ENCODE measurements at regions of chr11 and their contacts with region 1.

Region 1: GRCh38 chr11:60970369-60970774 is 1.1 kb upstream of the CD6 start:
- DNase-seq: no peak
- ATAC-seq: peak; percentile 96
- H3K4me3 ChIP-seq: no peak overlapping the region
- H3K27ac ChIP-seq: no peak overlapping the region
- H3K4me1 ChIP-seq: peaks cover 6% of the 10 kb centered on the region; the same call in 1 of the 2 replicates
- H3K27me3 ChIP-seq: no peaks in the 10 kb centered on the region
- CTCF ChIP-seq: peak; percentile 87 to 96 (median 94)
- EP300 ChIP-seq: no peak
- POLR2A ChIP-seq: no peak
- RAD21 ChIP-seq: peak; percentile 90

Region 2: GRCh38 chr11:60944490-60945294 is 25.7 kb before region 1 on chr11:
- CTCF ChIA-PET with region 1: interaction called, 12 read pairs
- POLR2A ChIA-PET with region 1: no interaction called
- RAD21 ChIA-PET with region 1: interaction called, 5 read pairs
- SMC1A ChIA-PET with region 1: interaction called, 14 read pairs
- in situ Hi-C with region 1: no loop called
- intact Hi-C with region 1: no loop called
- DNase-seq: no peak
- ATAC-seq: peak; percentile 76
- H3K4me3 ChIP-seq: 0 out of 2 replicates have a peak overlapping the region, but pooled peaks have one; percentile 8
- H3K27ac ChIP-seq: peak overlapping the region; percentile 31; the same call in 1 of the 2 replicates
- H3K4me1 ChIP-seq: peaks cover 20% of the 10 kb centered on the region
- H3K27me3 ChIP-seq: no peaks in the 10 kb centered on the region
- CTCF ChIP-seq: peak in 2 of 3 experiments; percentile 39 to 48; a peak in 4 of 6 replicates
- EP300 ChIP-seq: no peak
- POLR2A ChIP-seq: peak; percentile 26; the same call in 1 of the 2 replicates
- RAD21 ChIP-seq: peak; percentile 45

Region 3: DNA sequence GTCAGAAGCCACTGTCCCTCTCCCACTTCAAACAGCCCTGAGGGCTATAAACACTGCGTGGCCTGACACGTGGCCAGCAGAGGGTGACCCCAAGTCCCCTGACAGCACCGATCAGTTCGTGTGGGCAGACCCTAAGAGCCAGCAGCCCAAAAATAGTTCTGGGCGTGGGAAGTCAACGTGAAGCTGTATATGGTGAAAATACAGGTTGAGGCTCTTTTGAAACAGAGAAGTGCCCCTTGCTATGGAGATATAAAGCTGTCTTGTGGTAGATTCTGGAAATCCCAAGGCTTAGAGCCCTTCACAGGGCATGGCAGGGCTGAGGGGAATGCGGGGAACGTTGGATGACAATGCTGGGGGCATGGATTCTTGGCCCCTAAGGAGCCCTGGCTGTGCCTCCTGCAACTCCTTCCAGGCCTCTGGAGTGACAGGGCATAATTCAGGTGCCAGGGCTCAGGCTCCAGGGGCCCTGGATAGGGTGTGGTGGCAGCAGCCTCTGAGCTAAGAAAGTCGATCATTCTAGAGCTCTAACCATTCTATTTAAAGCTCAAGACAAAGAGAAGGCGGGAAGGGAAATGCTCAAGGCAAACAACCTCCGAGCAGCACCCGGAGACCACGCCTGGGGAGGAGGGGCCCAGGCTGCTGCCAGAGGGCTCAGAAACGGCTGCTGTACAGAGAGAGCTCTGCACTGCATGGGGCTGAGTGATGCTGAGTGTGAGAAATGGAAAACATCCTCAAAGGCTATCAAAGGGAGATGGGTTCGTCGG is 71.6 kb after region 1 on chr11:
- CTCF ChIA-PET with region 1: interaction called, 35 read pairs
- POLR2A ChIA-PET with region 1: interaction called, 5 read pairs
- RAD21 ChIA-PET with region 1: interaction called, 27 read pairs
- SMC1A ChIA-PET with region 1: no interaction called
- in situ Hi-C with region 1: no loop called
- intact Hi-C with region 1: no loop called
- DNase-seq: no peak
- ATAC-seq: peak; percentile 89
- H3K4me3 ChIP-seq: peak overlapping the region; percentile 51; the same call in 1 of the 2 replicates
- H3K27ac ChIP-seq: peak overlapping the region; percentile 77
- H3K4me1 ChIP-seq: peaks cover 15% of the 10 kb centered on the region
- H3K27me3 ChIP-seq: no peaks in the 10 kb centered on the region
- CTCF ChIP-seq: no peak
- EP300 ChIP-seq: peak in 1 of 2 experiments; percentile 26; a peak in 2 of 4 replicates
- POLR2A ChIP-seq: peak; percentile 79
- RAD21 ChIP-seq: no peak; the same call in 1 of the 2 replicates

Region 4: DNA sequence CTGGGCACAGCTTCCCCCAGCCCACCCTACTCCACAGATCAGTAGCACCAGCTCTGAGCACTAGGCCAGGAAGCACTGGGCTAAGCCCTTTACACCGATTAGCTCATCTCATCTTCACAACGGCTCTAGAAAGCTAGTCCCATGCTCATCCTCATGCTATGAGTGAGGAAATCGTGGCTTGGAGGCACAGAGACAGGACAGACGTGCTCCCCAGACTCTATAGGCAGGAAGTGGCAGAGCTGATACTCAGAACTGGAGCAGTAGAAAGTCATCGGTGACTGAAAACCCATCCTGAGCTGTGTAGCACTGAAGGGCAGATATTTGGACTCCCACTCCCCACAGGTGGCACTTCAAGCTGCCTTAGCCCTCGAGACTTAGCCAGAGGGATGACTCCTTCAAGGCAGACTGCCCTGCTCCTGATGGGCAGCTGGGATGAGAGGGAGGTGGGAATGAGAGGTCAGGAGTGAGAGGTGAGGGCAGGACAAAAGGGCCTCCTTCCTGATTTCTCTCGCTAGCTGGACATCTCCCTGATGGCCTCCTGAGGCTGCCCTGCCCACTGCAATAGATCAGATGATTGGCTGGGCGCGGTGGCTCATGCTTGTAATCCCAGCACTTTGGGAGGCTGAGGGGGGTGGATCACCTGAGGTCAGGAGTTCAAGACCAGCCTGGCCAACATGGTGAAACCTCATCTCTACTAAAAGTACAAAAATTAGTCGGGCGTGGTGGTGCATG is 141.6 kb after region 1 on chr11:
- CTCF ChIA-PET with region 1: interaction called, 20 read pairs
- POLR2A ChIA-PET with region 1: no interaction called
- RAD21 ChIA-PET with region 1: no interaction called
- SMC1A ChIA-PET with region 1: interaction called, 4 read pairs
- in situ Hi-C with region 1: no loop called
- intact Hi-C with region 1: no loop called
- DNase-seq: no peak
- ATAC-seq: peak; percentile 57
- H3K4me3 ChIP-seq: no peak overlapping the region
- H3K27ac ChIP-seq: no peak overlapping the region
- H3K4me1 ChIP-seq: peaks cover 9% of the 10 kb centered on the region
- H3K27me3 ChIP-seq: no peaks in the 10 kb centered on the region
- CTCF ChIP-seq: no peak
- EP300 ChIP-seq: no peak
- POLR2A ChIP-seq: no peak
- RAD21 ChIP-seq: no peak

Region 5: DNA sequence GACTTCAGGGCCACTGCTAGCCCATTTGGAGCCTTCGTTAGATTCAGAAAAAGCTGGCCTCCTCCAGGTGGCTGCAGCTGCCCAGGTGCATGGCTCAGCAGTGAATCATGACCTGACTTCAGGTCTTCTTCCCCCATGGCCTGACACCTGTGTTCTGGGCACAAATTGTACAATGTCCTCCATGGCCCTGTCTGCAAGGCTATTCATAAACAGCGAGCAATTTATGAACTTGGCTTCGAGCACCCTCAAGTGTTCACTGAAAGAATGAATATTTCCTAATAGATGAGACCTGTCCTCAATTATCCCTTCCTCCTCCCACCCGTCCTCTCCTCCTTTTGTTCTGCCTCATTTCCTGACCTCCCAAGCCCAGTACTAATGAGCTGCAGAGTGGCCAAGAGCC is 203.1 kb after region 1 on chr11:
- CTCF ChIA-PET with region 1: interaction called, 10 read pairs
- POLR2A ChIA-PET with region 1: no interaction called
- RAD21 ChIA-PET with region 1: no interaction called
- SMC1A ChIA-PET with region 1: interaction called, 3 read pairs
- in situ Hi-C with region 1: no loop called
- intact Hi-C with region 1: no loop called
- DNase-seq: no peak
- ATAC-seq: peak; percentile 69
- H3K4me3 ChIP-seq: no peak overlapping the region
- H3K27ac ChIP-seq: no peak overlapping the region
- H3K4me1 ChIP-seq: peaks cover 5% of the 10 kb centered on the region
- H3K27me3 ChIP-seq: no peaks in the 10 kb centered on the region; a peak in 1 of 4 replicates
- CTCF ChIP-seq: peak in 1 of 3 experiments; percentile 21; a peak in 2 of 6 replicates
- EP300 ChIP-seq: no peak
- POLR2A ChIP-seq: no peak
- RAD21 ChIP-seq: peak; percentile 51; the same call in 1 of the 2 replicates

Measured in GM12878 (cell line).